Caco-2 (cell line): ENCODE measurements at regions of chr11 and their contacts with region 1.

Region 1: DNA sequence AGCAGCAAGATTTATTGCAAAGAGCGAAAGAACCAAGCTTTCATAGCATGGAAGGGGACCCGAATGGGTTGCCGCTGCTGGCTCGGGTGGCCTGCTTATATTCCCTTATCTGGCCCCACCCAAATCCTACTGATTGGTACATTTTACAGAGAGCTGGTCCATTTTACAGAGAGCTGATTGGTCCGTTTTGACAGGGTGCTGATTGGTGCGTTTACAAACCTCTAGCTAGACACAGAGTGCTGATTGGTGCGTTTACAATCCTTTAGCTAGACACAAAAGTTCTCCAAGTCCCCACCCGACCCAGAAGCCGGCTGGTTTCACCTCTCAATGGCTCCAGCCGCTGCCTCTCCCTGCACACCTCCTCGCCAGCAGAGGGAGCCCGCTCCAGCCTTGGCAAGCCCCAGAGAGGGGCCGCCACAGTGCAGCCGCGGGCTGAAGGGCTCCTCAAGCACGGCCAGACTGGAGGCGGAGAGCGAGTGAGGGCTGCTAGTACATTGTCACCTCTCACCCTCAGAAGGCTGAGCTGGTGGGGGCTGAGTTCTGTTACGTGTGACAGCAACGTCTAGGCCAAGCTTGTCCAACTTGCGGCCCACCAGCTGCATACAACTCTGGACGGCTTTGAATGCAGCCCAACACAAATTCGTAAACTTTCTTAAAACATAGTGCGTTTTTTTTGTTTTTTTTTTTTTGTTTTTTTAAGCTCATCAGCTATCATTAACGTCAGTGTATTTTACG is 8.7 kb downstream of the PTH start:
- DNase-seq: peak; percentile 80 to 84
- H3K4me3 ChIP-seq: peak overlapping the region; percentile 43
- H3K4me3 Mint-ChIP-seq: peak overlapping the region; percentile 72
- H3K27ac Mint-ChIP-seq: no peak overlapping the region
- H3K4me1 ChIP-seq: no peaks in the 10 kb centered on the region
- H3K4me1 Mint-ChIP-seq: no peaks in the 10 kb centered on the region
- H3K27me3 ChIP-seq: no peaks in the 10 kb centered on the region
- H3K27me3 Mint-ChIP-seq: no peaks in the 10 kb centered on the region
- CTCF ChIP-seq: peak; percentile 45 to 76

Region 2: DNA sequence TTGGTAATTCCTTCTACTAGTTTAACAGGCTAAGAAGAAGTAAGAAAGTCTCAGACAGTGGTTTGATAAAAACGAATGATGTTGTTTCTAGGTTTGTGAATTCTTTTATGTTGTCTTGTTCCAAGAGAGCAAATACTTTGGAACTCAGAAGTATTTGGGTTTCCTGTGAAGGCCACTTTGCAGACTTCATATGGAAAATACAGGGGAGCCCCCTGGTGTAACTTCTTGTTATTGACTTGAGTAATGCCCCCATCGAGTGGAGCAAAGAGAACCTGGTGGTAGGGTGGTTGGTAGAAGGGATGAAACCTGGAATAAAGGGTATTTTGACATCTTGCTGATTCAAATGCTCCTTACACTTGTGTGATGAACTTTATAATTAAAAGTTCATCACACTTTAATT is 48.7 kb after region 1 on chr11:
- CTCF ChIA-PET with region 1: interaction called, 4 read pairs
- POLR2A ChIA-PET with region 1: no interaction called
- intact Hi-C with region 1: loop called (anchors 1 kb)
- DNase-seq: peak in 1 of 2 experiments; percentile 50
- H3K4me3 ChIP-seq: no peak overlapping the region
- H3K4me3 Mint-ChIP-seq: no peak overlapping the region
- H3K27ac Mint-ChIP-seq: no peak overlapping the region
- H3K4me1 ChIP-seq: no peaks in the 10 kb centered on the region
- H3K4me1 Mint-ChIP-seq: no peaks in the 10 kb centered on the region
- H3K27me3 ChIP-seq: no peaks in the 10 kb centered on the region
- H3K27me3 Mint-ChIP-seq: peaks cover 4% of the 10 kb centered on the region
- CTCF ChIP-seq: peak; percentile 39 to 51

Region 3: GRCh38 chr11:13668102-13668956 is 181.2 kb after region 1 on chr11 and contains the start of gene FAR1:
- CTCF ChIA-PET with region 1: interaction called, 11 read pairs
- POLR2A ChIA-PET with region 1: interaction called, 3 read pairs
- intact Hi-C with region 1: no loop called
- DNase-seq: peak; percentile 99
- H3K4me3 ChIP-seq: peak within 1 kb of the TSS; percentile 73
- H3K4me3 Mint-ChIP-seq: peak within 1 kb of the TSS; percentile 92
- H3K27ac Mint-ChIP-seq: peak within 1 kb of the TSS; percentile 91
- H3K4me1 ChIP-seq: peaks cover 32% of the 10 kb centered on the region
- H3K4me1 Mint-ChIP-seq: peaks cover 27% of the 10 kb centered on the region
- H3K27me3 ChIP-seq: no peaks in the 10 kb centered on the region
- H3K27me3 Mint-ChIP-seq: no peaks in the 10 kb centered on the region
- CTCF ChIP-seq: peak; percentile 42 to 65
- total RNA-seq, gene FAR1: 91.2 and 96.0 TPM in 2 replicates